PC-9 (cell line): ENCODE measurements at regions of chr16 and their contacts with region 1.

Region 1: DNA sequence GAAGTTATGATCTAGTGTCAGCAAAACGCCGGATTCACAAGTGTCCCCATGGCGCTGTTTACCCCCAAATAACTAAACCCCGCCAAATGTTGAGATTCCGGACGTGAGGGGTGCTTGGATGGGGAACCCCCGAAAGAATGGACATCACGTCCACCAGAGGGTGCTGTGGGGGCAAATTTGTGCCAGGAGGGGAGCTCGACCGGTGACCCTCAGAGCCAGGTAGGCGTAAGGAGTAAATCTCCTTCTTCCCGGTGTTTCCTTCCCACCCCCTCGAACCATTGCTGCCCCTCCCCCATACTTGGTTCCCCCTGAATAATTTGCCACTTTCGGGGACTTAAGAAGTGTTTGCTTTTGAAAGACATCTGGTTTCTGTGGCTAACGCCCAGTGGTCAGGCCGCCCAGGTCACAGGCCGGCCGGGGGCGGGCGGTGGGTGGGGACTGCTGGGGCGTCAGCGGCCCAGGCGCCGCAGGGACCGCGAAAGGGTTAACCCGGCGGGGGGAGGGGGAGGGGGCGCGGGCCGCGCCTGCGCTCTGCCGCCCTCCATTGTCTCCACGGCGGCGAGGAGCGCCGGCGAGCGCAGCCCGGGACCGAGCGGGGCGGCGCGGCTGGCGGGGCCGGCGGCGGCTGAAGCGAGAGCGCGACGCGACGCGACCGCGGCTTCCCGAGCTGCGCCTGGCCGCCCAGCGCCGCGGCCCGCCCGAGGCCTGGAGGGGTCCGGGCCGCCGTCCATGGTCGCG is at the start of gene ZNRF1:
- DNase-seq: peak; percentile 82 to 87
- H3K4me3 ChIP-seq: peak within 1 kb of the TSS; percentile 74
- H3K27ac ChIP-seq: peak within 1 kb of the TSS; percentile 86
- H3K4me1 ChIP-seq: peaks cover 52% of the 10 kb centered on the region
- H3K27me3 ChIP-seq: no peaks in the 10 kb centered on the region
- CTCF ChIP-seq: peak; percentile 94
- total RNA-seq, gene ZNRF1: 64.4 and 79.3 TPM in 2 replicates

Region 2: GRCh38 chr16:74709441-74709877 is 289.2 kb before region 1 on chr16:
- CTCF ChIA-PET with region 1: no interaction called
- POLR2A ChIA-PET with region 1: no interaction called
- intact Hi-C with region 1: loop called (anchors 10 kb)
- DNase-seq: peak; percentile 79 to 81
- H3K4me3 ChIP-seq: no peak overlapping the region
- H3K27ac ChIP-seq: no peak overlapping the region
- H3K4me1 ChIP-seq: peaks cover 4% of the 10 kb centered on the region; the same call in 1 of the 2 replicates
- H3K27me3 ChIP-seq: no peaks in the 10 kb centered on the region
- CTCF ChIP-seq: peak; percentile 98

Region 3: DNA sequence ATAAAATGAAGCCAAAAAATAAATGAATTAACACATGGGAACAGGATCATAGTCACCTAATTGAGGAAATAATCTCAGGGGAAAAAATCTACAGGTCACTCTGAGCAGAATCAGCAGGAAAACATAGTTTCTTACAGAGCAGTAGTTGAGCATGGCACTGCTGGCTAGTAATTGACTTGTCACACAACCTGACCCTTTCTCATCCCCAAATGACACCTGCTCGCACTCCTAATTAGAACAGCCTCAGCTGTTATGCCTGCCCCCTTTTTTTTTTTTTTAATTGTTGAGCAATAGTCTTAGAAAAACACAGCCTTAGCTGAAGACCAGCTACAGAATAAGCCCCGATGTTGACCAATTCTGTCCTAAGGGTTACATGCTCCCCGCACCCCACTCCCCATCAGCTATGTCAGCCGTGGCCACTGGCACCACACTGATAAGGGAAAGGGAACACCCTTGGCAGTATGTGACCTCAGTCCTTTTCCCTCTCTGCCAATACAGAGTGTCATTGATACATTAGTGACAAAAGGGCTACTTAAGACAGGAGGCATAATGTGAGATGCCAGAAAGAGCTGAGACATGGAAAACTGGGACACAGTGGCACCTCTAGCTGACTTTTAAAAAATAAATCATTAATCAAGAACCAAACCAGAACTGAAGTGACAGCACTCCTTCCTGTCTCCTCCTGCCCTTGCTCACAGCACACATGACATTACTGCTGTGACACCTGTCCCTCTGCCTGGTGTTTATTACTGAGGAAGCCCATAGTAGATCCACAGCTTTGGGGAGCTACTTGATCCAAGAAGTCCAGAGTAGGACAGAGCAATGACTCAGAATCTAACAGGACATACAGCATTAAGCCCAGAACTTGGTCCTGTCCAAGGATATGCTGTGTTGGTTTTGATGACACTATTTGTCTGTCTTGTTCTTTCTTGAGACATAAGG is 55.4 kb before region 1 on chr16:
- CTCF ChIA-PET with region 1: no interaction called
- POLR2A ChIA-PET with region 1: no interaction called
- intact Hi-C with region 1: no loop called
- DNase-seq: no peak
- H3K4me3 ChIP-seq: no peak overlapping the region
- H3K27ac ChIP-seq: no peak overlapping the region
- H3K4me1 ChIP-seq: peaks cover 1% of the 10 kb centered on the region; the same call in 1 of the 2 replicates
- H3K27me3 ChIP-seq: no peaks in the 10 kb centered on the region
- CTCF ChIP-seq: no peak

Region 4: DNA sequence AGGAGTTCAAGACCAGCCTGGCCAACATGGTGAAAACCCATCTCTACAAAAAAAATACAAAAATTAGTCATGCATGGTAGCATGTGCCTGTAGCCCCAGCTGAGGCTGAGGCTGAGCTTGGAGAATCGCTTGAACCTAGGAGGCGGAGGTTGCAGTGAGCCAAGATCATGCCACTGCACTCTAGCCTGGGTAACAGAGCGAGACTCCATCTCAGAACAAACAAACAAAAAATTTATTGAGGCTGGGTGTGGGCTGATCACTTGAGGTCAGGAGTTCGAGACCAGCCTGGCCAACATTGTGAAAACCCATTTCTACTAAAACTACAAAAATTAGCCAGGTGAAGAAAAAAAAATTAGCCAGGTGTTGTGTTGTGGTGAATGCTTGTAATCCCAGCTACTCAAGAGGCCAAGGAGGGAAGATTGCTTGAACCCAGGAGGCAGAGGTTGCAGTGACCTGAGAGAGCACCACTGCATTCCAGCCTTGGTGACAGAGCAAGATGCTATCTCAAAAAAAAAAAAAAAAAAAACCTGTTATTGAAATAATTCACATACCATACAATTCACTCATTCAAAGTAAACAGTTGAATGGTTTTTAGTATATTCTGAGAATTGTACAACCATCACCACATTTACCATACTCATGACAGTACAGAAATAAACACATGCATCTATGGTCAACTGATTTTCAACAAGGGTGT is 31.1 kb after region 1 on chr16:
- CTCF ChIA-PET with region 1: no interaction called
- POLR2A ChIA-PET with region 1: no interaction called
- intact Hi-C with region 1: loop called (anchors 1 kb)
- DNase-seq: peak; percentile 65 to 91
- H3K4me3 ChIP-seq: no peak overlapping the region
- H3K27ac ChIP-seq: peak overlapping the region; percentile 71
- H3K4me1 ChIP-seq: peaks cover 66% of the 10 kb centered on the region
- H3K27me3 ChIP-seq: no peaks in the 10 kb centered on the region
- CTCF ChIP-seq: no peak

Region 5: DNA sequence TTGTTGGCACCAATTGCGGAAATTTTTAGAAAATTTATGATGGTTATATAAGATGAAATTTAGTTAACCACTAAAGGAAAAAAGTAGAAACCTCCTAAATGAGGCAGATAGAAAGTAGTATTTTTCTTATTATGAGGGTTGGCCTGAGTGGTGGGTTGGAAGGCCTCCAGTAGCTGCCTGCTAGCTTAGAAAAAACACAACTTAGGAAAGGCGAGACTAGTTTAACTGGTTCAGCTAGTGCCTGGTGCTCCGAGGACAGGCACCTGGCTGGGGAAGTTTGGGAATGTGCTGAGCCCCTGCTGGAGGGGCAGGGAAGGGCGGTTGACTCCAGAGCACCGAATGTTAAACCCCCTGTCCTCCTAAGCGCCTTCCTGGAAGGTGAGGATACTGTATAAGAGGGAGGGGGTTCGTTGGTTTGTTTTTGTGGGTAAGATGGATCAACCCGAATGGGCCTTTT is 98.0 kb after region 1 on chr16:
- CTCF ChIA-PET with region 1: interaction called, 9 read pairs
- POLR2A ChIA-PET with region 1: no interaction called
- intact Hi-C with region 1: loop called (anchors 1 kb)
- DNase-seq: peak; percentile 77 to 83
- H3K4me3 ChIP-seq: peak overlapping the region; percentile 26; the same call in 1 of the 2 replicates
- H3K27ac ChIP-seq: peak overlapping the region; percentile 55
- H3K4me1 ChIP-seq: peaks cover 42% of the 10 kb centered on the region
- H3K27me3 ChIP-seq: no peaks in the 10 kb centered on the region
- CTCF ChIP-seq: peak; percentile 80

Region 6: GRCh38 chr16:75198135-75198600 is 199.5 kb after region 1 on chr16:
- CTCF ChIA-PET with region 1: no interaction called
- POLR2A ChIA-PET with region 1: no interaction called
- intact Hi-C with region 1: loop called (anchors 5 kb)
- DNase-seq: no peak
- H3K4me3 ChIP-seq: no peak overlapping the region
- H3K27ac ChIP-seq: no peak overlapping the region
- H3K4me1 ChIP-seq: no peaks in the 10 kb centered on the region
- H3K27me3 ChIP-seq: no peaks in the 10 kb centered on the region
- CTCF ChIP-seq: no peak